ENCODE measurements at regions of chr16 and their contacts with region 1.

Region 1: DNA sequence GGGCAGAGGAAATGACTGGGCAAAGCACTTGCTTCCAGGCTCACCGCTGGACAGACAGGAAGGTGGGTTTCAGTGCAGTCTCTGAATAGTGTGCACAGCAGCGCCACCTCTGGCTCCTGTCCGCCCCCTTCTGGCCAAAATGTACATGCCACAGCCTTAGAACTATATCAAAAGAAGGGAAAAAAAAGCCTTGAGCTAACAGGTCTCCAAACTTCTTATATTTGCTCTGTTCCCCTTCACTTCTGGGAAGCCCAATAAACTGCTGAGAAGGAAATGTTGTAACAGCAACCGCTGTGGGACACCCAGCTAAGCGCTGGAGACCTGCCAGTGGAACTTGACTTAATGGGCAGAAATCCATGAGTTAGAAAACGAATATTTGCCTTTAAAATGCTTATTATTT is 17.5 kb downstream of the COG7 start:
- DNase-seq: no peak
- H3K4me3 ChIP-seq: no peak overlapping the region
- CTCF ChIP-seq: peak; percentile 86

Region 2: DNA sequence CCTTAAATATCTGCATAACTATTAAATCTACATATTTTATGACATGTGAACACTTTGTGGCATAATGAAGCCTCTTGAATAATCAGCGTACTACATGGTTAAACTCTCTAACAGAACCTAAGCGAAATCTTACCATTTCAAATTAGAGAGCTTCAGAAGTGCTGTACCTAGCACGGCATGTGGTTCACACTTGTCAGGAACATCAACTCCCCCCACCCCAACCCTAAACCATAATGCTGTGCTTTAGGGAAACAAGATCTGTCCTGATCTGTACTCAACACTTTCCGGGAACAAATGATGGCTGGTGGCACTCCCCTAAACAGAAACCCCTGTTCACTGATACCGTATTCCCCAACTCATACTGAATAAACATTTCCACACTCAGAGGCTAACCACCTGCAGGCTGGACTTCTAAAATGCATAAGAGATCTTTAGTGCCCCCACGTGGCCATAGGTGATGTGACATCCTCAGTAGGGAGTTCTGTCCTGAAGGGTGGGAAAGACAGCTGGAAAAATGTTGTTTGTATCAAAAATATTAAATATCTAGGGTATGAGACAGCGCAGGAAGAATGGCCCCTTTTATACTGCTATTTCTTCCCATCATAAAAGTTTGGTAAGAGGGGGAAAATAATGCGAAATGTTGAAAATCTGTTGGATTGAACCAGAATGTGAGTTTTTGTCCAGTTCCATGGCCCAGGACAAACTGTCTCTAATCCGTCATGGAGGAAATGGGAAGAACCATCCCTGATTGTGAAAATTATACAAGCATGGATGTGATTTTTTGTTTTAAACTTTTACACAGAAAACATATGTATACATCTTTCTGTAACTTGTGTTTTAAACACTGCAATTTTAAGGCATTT is 374.8 kb before region 1 on chr16:
- CTCF ChIA-PET with region 1: interaction called, 25 read pairs
- POLR2A ChIA-PET with region 1: no interaction called
- DNase-seq: no peak
- H3K4me3 ChIP-seq: no peak overlapping the region
- CTCF ChIP-seq: peak; percentile 80

Region 3: GRCh38 chr16:23145608-23146007 is 289.9 kb before region 1 on chr16:
- CTCF ChIA-PET with region 1: interaction called, 10 read pairs
- POLR2A ChIA-PET with region 1: no interaction called
- DNase-seq: no peak
- H3K4me3 ChIP-seq: no peak overlapping the region
- CTCF ChIP-seq: no peak

Region 4: DNA sequence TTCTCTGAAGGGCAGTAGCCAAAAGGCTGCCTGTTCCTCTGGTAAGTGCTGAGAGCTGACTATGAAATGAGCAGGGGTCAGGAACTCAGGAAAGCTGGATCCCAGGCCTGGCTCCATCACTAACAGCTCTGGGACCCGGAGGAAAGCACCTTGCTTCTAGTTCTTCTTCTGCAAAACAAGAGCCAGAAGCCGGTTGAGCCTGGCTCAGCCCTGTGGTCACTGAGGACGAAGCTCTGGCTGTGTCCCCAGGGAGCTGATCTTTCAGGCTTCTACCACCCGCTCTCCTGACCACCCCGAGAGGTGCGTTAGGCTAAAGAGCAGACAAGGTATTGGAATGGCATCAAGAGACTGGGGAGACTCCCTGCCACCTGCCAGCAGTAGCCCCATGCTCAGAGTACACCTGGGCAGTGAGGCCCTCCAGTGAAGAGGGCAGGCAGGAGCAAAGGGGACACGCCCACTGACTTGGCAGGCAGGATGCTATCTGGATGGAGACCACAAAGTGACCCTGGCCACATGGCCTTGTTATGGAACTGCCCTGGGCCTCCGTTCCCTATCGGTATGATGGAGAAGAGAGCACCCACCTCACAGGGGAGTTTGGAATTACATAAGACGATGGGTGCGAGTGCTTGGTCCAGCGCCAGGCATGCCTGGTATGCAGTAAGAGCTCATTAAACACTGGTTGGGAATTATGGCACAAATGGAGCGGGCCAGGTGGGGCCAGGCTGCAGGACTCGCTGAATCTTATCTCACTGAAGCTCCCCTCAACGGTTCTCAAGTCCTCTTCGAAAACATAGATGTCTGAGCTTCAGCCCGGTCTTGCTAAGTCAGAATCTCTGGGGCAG is 43.9 kb before region 1 on chr16:
- CTCF ChIA-PET with region 1: interaction called, 18 read pairs
- POLR2A ChIA-PET with region 1: no interaction called
- DNase-seq: no peak
- H3K4me3 ChIP-seq: no peak overlapping the region
- CTCF ChIP-seq: no peak

Region 5: GRCh38 chr16:23423496-23424049 is 11.9 kb before region 1 on chr16:
- CTCF ChIA-PET with region 1: interaction called, 115 read pairs
- POLR2A ChIA-PET with region 1: interaction called, 3 read pairs
- DNase-seq: peak; percentile 86
- H3K4me3 ChIP-seq: no peak overlapping the region
- CTCF ChIP-seq: no peak

Region 6: GRCh38 chr16:23505180-23505665 is 69.7 kb after region 1 on chr16:
- CTCF ChIA-PET with region 1: interaction called, 11 read pairs
- POLR2A ChIA-PET with region 1: no interaction called
- DNase-seq: no peak
- H3K4me3 ChIP-seq: no peak overlapping the region
- CTCF ChIP-seq: no peak

Region 7: GRCh38 chr16:23788685-23789084 is 353.2 kb after region 1 on chr16:
- CTCF ChIA-PET with region 1: no interaction called
- POLR2A ChIA-PET with region 1: no interaction called
- DNase-seq: no peak
- H3K4me3 ChIP-seq: no peak overlapping the region
- CTCF ChIP-seq: no peak